CD8-positive, alpha-beta T cell (primary cell): ENCODE measurements at regions of chr16 and their contacts with region 1.

Region 1: DNA sequence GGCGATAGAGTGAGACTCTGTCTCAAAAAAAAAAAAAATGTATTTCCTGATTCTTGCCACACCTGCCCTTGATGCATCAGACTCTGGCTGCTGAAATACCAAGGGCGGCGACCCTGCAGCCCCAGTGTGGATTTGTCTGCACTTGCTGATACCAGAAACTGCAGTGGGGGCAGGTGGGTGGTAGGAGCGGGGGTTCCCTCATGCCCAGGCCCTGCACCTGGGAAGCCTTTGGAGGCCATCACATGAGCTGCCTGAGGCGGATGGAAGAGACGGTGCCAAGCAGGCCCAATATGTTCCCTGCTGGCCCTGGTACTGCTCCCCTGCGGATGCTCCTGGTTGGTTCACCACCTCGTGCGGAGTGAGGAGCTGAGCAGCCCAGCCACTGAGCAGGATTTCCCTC is 50.6 kb downstream of the MARF1 start:
- DNase-seq: peak in 8 of 9 experiments; percentile 19 to 71 (median 48)
- ATAC-seq: peak; percentile 5
- H3K4me3 ChIP-seq: no peak overlapping the region
- H3K4me3 Mint-ChIP-seq: no peak overlapping the region
- H3K27ac ChIP-seq: peak overlapping the region in 1 of 2 experiments; percentile 65
- H3K27ac Mint-ChIP-seq: peak overlapping the region; percentile 85
- H3K4me1 ChIP-seq: peaks cover 29% of the 10 kb centered on the region
- H3K4me1 Mint-ChIP-seq: peaks cover 35% of the 10 kb centered on the region
- H3K27me3 ChIP-seq: no peaks in the 10 kb centered on the region
- H3K27me3 Mint-ChIP-seq: no peaks in the 10 kb centered on the region
- CTCF ChIP-seq: no peak

Region 2: DNA sequence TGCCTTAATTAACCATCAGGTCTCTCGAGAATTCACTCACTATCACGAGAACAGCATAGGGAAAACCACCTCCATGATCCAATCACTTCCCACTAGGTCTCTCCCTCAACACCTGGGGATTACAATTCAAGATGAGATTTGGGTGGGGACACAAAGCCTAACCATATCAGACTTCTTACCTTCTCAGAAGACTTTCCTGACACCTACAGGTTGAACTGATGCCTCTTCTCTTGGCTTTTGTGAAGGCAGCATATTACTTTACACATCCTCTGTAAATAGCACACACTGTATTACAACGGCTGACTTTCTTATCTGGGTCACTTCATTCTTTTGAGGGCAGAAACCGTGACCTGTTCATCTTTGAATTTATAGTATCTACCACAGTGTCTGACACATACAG is 134.4 kb before region 1 on chr16:
- CTCF ChIA-PET with region 1: no interaction called
- POLR2A ChIA-PET with region 1: no interaction called
- intact Hi-C with region 1: no loop called
- DNase-seq: no peak
- ATAC-seq: no peak
- H3K4me3 ChIP-seq: no peak overlapping the region
- H3K4me3 Mint-ChIP-seq: no peak overlapping the region
- H3K27ac ChIP-seq: no peak overlapping the region
- H3K27ac Mint-ChIP-seq: no peak overlapping the region
- H3K4me1 ChIP-seq: no peaks in the 10 kb centered on the region
- H3K4me1 Mint-ChIP-seq: no peaks in the 10 kb centered on the region
- H3K27me3 ChIP-seq: no peaks in the 10 kb centered on the region
- H3K27me3 Mint-ChIP-seq: peaks cover 4% of the 10 kb centered on the region
- CTCF ChIP-seq: no peak

Region 3: GRCh38 chr16:15704545-15704987 is 112.2 kb after region 1 on chr16:
- CTCF ChIA-PET with region 1: no interaction called
- POLR2A ChIA-PET with region 1: no interaction called
- intact Hi-C with region 1: loop called in 1 of 2 experiments (anchors 10 kb)
- DNase-seq: peak; percentile 56 to 87 (median 73)
- ATAC-seq: peak; percentile 82
- H3K4me3 ChIP-seq: no peak overlapping the region
- H3K4me3 Mint-ChIP-seq: no peak overlapping the region
- H3K27ac ChIP-seq: no peak overlapping the region
- H3K27ac Mint-ChIP-seq: peak overlapping the region; percentile 22
- H3K4me1 ChIP-seq: no peaks in the 10 kb centered on the region
- H3K4me1 Mint-ChIP-seq: peaks cover 16% of the 10 kb centered on the region
- H3K27me3 ChIP-seq: no peaks in the 10 kb centered on the region
- H3K27me3 Mint-ChIP-seq: no peaks in the 10 kb centered on the region
- CTCF ChIP-seq: peak; percentile 88